ENCODE measurements at regions of chr9 and their contacts with region 1.

Region 1: DNA sequence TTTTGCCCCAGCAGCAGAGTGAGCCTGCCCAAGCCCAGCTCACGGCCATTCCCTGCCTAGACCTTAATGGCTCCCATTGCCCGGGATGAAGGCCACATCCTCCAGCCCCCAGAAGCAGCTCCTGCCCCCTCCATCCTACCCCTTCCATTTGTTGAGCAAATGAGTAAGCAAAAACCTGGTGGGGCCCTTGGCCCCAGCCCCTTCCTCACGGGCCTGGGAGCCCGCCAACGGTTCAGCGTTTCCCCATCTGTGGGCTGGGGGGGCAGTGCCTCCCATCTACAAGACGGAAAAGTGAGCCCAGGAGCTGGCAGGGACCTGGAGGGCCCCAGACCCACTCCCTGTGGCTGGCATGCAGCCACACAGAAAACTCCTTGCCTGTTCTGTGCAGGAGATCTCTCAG is 4.4 kb downstream of the CCDC187 start:
- DNase-seq: no peak
- H3K4me3 ChIP-seq: no peak overlapping the region
- H3K27ac ChIP-seq: no peak overlapping the region
- H3K4me1 ChIP-seq: no peaks in the 10 kb centered on the region
- CTCF ChIP-seq: no peak

Region 2: GRCh38 chr9:136234597-136234996 is 64.9 kb before region 1 on chr9:
- CTCF ChIA-PET with region 1: interaction called, 10 read pairs
- POLR2A ChIA-PET with region 1: no interaction called
- intact Hi-C with region 1: no loop called
- DNase-seq: no peak
- H3K4me3 ChIP-seq: no peak overlapping the region
- H3K27ac ChIP-seq: no peak overlapping the region
- H3K4me1 ChIP-seq: peaks cover 21% of the 10 kb centered on the region
- CTCF ChIP-seq: no peak

Measured in OCI-LY7 (cell line).